HEK293 (cell line): ENCODE measurements at regions of chr19 and their contacts with region 1.

Region 1: DNA sequence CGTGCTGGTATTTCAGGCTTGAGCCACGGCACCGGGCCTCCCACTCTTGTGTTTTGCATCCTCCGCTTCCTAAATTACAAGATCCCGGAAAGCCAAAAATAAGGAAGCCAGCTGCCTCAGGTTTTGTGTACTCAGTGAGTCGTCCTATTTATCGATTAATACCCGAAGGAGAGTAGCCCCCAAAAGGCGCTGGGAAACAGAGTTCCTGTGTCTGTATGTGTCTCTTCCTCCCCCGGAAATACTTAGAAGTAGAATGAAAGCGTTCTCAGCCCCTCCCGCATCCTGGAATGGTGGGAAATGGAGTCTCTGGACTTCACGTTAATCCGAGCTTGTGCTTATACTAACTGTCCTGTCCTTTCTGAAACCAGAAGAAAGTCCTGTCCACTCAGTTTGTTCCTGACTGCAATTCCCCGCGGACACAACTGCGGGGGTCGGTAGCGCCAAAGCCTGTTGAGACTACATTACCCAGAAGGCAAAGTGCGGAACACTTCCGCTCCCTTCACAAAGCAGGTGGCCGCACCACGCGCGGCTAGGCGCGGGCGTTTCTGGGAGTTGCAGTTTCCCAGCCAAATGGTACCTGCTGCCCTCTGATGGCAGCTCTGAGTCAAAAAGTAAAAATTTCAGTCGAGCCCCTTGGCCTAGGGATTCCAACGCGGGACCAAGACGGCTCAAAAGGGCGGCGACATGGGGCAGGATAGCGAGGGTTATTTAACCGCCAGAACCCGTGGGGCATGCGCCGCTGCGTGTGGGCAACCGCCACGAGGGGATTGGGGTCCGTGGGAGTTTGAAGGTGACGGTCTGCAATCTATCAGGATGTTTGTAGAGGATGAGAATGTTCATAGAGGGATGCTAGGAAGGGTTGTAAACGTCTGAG is 2.2 kb upstream of the GSK3A start:
- H3K4me3 ChIP-seq: peak overlapping the region; percentile 38
- H3K27ac ChIP-seq: peak overlapping the region; percentile 99
- H3K4me1 ChIP-seq: peaks cover 18% of the 10 kb centered on the region
- CTCF ChIP-seq: peak; percentile 95

Region 2: DNA sequence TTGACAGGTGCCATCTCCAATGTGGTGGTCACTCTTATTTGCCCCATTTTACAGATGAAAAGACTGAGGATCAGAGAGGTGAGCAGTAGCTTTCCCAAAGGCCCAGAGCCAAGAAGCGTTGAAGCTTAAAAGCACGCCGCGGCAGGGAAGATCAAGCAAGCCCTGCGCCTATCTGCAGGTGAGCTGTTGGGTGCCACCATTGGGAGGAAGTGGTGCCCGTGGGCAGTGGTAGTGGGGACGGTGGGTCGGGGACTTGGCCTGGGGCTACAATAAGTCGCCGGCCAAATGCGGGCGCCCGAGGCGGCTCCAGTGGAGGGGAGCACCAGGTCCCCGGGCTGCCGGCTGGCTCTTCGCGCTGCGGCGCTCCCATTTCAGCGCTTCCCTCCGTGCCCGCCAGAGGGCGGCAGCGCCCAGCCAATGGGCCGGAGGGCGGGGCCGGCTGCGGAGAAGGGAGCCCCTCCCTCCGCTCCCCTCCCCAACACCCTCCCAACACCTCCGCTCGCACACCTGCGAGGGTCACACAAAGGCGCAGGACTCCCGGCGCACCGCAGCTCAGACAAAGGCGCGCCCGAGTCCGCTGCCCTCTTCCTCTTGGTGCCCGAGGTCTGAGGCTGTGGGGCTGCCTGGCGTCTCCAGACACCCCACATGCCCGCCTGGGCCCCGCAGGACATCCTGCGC is 111.6 kb before region 1 on chr19:
- CTCF ChIA-PET with region 1: interaction called, 36 read pairs
- POLR2A ChIA-PET with region 1: interaction called, 8 read pairs
- H3K4me3 ChIP-seq: no peak overlapping the region
- H3K27ac ChIP-seq: no peak overlapping the region
- H3K4me1 ChIP-seq: no peaks in the 10 kb centered on the region
- CTCF ChIP-seq: peak; percentile 98

Region 3: GRCh38 chr19:42254989-42255765 is 10.6 kb after region 1 on chr19 and contains the start of gene ERF:
- CTCF ChIA-PET with region 1: interaction called, 23 read pairs
- POLR2A ChIA-PET with region 1: interaction called, 31 read pairs
- H3K4me3 ChIP-seq: peak within 1 kb of the TSS; percentile 83
- H3K27ac ChIP-seq: peak within 1 kb of the TSS; percentile 99
- H3K4me1 ChIP-seq: peaks cover 34% of the 10 kb centered on the region
- CTCF ChIP-seq: no peak

Region 4: DNA sequence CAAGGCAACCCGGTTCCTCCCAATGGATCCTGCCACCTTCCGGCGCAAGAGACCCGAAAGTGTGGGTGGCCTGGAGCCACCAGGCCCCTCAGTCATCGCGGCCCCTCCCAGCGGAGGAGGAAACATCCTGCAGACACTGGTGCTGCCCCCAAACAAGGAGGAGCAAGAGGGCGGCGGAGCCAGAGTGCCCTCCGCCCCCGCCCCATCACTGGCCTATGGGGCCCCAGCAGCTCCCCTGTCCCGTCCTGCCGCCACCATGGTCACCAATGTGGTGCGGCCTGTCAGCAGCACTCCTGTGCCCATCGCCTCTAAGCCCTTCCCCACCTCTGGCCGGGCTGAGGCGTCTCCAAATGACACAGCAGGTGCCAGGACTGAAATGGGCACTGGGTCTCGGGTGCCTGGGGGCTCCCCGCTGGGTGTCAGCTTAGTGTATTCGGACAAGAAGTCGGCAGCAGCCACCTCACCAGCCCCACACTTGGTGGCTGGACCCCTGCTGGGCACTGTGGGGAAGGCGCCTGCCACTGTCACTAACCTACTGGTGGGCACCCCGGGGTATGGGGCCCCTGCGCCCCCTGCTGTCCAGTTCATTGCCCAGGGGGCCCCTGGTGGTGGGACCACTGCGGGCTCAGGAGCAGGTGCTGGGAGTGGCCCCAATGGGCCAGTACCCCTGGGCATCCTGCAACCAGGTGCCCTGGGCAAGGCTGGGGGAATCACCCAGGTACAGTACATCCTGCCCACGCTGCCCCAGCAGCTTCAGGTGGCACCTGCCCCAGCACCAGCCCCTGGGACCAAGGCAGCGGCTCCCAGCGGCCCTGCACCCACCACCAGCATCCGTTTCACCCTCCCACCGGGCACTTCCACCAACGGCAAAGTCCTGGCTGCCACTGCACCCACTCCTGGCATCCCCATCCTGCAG is 46.2 kb after region 1 on chr19:
- CTCF ChIA-PET with region 1: interaction called, 55 read pairs
- POLR2A ChIA-PET with region 1: interaction called, 242 read pairs
- H3K4me3 ChIP-seq: no peak overlapping the region
- H3K27ac ChIP-seq: no peak overlapping the region
- H3K4me1 ChIP-seq: peaks cover 6% of the 10 kb centered on the region
- CTCF ChIP-seq: peak; percentile 92

Region 5: DNA sequence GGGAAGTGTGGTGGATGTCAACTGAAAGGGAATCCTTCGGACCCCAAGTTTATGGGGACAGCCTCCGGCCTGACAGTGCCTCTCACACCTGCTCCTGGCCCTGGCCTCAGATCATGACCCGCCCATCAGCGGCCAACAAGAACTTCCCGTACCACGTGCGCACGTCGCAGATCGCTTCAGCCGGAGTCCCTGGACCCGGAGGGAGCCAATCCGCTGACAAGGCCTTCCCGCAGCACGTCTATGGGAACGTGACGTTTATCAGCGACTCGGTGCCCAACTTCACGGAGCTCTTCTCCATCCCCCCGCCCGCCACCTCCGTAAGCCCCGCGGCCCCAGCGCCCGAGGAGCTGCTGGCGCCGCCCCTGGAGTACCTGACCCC is 78.9 kb after region 1 on chr19:
- CTCF ChIA-PET with region 1: interaction called, 31 read pairs
- POLR2A ChIA-PET with region 1: interaction called, 6 read pairs
- H3K4me3 ChIP-seq: no peak overlapping the region
- H3K27ac ChIP-seq: no peak overlapping the region
- H3K4me1 ChIP-seq: peaks cover 23% of the 10 kb centered on the region
- CTCF ChIP-seq: no peak

Region 6: DNA sequence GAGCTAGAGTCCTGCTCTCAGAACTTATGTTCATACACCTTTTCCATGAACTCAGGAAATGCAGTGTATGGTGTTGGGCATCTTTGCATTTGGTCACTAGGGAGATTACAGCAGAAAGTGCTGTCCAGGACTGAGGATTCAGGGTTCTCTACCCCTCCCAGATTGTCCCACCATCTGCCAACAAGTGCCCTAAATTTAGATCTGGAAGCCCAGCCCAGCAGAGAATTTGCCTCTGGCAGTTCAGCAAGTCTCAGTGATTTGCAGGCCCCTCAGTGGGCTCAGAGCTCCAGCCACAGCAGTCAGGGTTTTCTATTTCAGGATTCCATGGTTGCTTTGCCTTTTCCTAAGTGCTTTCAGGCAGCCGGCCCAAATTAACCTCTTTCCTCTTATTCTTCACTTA is 122.1 kb after region 1 on chr19:
- CTCF ChIA-PET with region 1: no interaction called
- POLR2A ChIA-PET with region 1: no interaction called
- H3K4me3 ChIP-seq: no peak overlapping the region
- H3K27ac ChIP-seq: peak overlapping the region; percentile 31; the same call in 1 of the 2 replicates
- H3K4me1 ChIP-seq: 0 out of 2 replicates have a peak, but pooled peaks cover 3% of the 10 kb centered on the region
- CTCF ChIP-seq: no peak